Activated naive CD4-positive, alpha-beta T cell treated with anti-CD3 and anti-CD28 coated beads for 36 hours (primary cell): ENCODE measurements at regions of chr2 and their contacts with region 1.

Region 1: GRCh38 chr2:36246320-36246990 is 109.1 kb upstream of the CRIM1 start:
- DNase-seq: no peak
- H3K4me3 Mint-ChIP-seq: peak overlapping the region; percentile 24
- H3K27ac Mint-ChIP-seq: peak overlapping the region; percentile 72
- H3K4me1 Mint-ChIP-seq: peaks cover 59% of the 10 kb centered on the region
- H3K27me3 Mint-ChIP-seq: no peaks in the 10 kb centered on the region

Region 2: DNA sequence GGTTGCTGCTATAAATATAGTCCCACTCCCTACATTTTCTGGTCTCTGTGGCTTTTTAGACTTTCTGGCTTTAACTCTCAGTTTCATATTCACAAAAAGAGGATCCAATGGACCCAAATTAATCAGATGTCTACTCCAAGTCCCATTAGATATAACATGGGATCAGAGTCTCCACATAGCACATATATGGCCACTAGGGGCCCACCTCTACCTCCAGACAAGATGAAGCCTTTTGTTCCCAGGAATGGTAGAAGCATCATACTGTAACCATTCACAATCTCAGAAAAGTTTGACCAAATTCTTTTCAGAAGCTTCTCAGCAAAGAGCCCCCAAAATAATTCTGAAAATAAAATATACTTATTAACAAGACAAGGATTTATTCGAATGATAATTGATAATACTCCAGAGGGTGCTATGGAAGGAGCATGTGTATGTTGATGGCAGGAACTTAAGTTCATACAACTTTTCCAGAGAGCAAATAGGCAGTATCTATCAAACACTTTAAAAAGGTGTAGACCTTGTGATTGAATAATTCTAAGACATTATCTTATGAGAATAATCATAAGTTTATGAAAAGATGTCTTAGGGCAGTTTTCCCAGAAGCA is 273.2 kb before region 1 on chr2:
- CTCF ChIA-PET with region 1: no interaction called
- intact Hi-C with region 1: loop called (anchors 2 kb)
- DNase-seq: peak; percentile 33
- H3K4me3 Mint-ChIP-seq: no peak overlapping the region
- H3K27ac Mint-ChIP-seq: no peak overlapping the region
- H3K4me1 Mint-ChIP-seq: peaks cover 2% of the 10 kb centered on the region
- H3K27me3 Mint-ChIP-seq: peaks cover 4% of the 10 kb centered on the region

Region 3: DNA sequence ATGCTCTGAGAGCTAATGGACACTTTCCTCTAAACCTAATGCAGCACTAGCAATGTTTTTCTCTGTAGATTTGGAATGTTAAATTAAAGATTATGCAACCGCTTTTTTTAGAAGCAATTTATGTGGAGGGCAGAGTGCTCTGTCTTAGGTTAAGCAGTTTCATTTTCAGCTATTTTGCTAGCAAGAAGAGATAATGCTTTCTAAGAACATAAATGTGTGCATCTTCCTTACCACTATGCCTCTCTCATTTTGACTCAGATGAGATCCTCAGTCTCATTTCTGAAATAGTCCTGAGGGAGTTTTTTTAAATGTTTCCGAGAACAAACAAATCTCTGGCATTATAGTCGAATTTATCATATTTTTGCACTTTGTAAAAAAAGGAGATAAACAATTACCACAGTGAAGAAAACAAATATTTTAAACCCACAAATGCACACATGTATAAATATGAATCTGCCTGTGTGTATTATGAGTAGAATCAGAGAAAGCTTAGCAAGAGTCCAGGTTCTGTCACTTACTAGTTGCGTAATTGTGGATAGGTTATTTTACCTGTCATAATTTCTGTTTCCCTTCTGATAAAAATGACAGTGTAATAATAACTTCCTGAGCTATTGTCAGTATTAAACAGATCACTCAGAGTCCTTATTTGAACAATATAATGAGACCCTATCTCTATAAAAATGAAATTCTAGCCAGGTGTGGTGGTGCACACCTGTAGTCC is 98.6 kb before region 1 on chr2:
- CTCF ChIA-PET with region 1: no interaction called
- intact Hi-C with region 1: loop called (anchors 1 kb)
- DNase-seq: no peak
- H3K4me3 Mint-ChIP-seq: no peak overlapping the region
- H3K27ac Mint-ChIP-seq: no peak overlapping the region
- H3K4me1 Mint-ChIP-seq: peaks cover 7% of the 10 kb centered on the region
- H3K27me3 Mint-ChIP-seq: no peaks in the 10 kb centered on the region

Region 4: DNA sequence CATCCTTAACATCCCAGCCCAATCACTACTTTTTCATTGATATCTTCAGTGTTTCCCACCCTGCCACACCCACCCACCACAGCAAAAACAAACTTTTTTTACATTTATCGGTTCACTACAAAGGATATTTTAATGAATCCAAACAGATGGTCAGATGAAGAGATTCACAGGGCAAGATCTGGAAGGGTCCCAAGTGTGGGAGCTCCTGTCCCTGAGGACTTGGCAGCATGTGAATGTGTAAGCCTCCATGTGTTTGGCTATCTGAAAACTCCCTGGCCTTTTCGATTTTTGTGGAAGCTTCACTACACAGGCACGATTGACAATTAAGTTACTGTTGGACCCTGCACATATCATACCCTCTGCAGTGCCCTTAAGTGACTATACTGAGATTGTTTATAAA is 61.0 kb after region 1 on chr2:
- CTCF ChIA-PET with region 1: no interaction called
- intact Hi-C with region 1: loop called (anchors 1 kb)
- DNase-seq: no peak
- H3K4me3 Mint-ChIP-seq: no peak overlapping the region
- H3K27ac Mint-ChIP-seq: no peak overlapping the region
- H3K4me1 Mint-ChIP-seq: peaks cover 23% of the 10 kb centered on the region
- H3K27me3 Mint-ChIP-seq: peaks cover 3% of the 10 kb centered on the region

Region 5: DNA sequence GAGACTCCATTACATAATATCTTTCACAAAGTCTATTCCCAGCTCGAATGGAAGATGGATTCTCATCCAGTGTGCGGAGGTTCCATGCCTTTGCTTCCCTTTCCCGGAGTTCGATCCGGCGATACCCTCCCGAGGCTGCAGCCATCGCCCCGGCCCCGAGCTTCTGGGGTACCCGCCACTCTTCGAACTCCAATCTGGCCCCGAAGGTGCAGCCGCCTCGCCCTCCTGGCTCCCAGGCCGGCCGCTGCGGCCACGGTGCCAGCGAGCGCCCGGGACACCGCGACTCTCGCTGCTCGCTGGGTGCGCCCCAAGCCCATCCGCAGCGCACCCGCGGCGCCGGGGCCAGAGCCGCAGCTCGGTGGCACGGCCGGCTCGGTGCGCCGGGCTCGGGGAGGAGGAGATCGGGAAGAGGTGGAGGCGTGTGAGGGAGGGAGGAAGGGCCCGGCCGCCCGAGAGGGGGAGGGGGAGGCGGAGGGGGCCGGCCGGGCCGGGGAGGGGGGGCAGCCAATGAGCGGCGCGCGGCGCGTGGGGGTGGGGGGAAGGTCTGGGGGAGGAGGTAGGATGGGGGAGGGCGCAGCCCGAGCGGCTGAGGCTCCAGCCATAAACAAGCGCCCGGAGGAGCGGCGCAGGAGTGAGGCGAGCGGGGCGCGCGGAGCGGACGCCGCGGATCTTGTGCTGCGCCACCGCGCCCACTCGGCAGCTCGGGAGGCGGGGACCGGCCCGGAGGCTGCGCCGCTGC is 108.9 kb after region 1 on chr2 and contains the start of gene CRIM1:
- CTCF ChIA-PET with region 1: no interaction called
- intact Hi-C with region 1: loop called (anchors 1 kb)
- DNase-seq: peak; percentile 52
- H3K4me3 Mint-ChIP-seq: peak within 1 kb of the TSS; percentile 73
- H3K27ac Mint-ChIP-seq: no peak within 1 kb of the TSS
- H3K4me1 Mint-ChIP-seq: peaks cover 25% of the 10 kb centered on the region
- H3K27me3 Mint-ChIP-seq: peaks cover 34% of the 10 kb centered on the region
- total RNA-seq, gene CRIM1: 3.1 to 3.3 TPM

Region 6: DNA sequence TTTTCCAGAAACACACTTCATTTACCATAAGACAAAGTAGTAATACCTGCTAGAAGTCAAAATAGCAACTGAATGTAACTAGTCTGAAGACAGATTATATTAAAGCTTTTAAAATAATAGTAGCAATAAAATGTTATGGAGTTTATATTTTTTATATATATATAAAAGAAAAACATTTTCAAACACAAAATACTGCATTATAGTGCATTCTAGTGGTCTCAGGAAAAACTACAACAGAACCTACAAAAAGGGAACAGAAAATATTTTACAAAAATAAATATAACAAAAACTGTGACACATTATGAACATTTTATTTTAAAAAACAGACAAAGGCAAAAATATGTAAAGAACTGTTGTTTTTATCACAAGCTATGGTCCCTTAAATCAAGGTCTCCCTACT is 671.9 kb after region 1 on chr2:
- CTCF ChIA-PET with region 1: no interaction called
- intact Hi-C with region 1: loop called (anchors 10 kb)
- DNase-seq: no peak
- H3K4me3 Mint-ChIP-seq: no peak overlapping the region
- H3K27ac Mint-ChIP-seq: no peak overlapping the region
- H3K4me1 Mint-ChIP-seq: peaks cover 19% of the 10 kb centered on the region
- H3K27me3 Mint-ChIP-seq: no peaks in the 10 kb centered on the region

Region 7: DNA sequence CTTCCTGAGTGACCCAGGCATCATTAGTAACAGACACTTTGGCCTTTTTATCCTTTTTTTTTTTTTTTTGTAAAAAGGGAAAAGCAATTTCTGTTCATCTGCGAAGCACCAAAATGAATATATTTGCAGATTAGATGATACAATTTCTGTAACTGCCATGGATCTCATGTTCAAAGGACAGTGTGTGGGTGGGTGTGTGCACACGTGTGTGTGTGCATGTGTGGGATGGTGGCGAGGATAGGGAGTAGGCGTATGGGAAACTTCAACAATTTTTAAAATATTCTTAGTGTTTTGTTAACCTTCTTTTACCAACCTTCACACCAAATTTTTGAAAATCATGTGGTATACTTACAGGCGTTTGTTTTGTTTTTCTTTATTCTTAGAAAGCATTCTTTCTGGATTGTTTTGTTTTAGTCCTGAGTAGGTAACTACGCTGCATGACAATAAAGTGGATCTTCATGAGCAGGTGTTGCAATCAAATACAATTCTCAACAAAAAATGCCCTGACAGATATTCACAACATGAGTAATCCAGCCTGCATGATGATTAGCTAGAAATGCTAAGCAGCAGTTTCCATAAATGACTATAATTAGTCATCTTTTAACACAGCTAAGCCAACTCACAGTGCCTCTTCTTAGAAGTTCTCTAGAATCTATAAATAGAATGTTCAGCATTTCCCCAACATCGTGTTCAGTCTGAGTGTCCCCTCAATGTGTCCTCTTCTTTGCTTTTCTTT is 1625.2 kb after region 1 on chr2:
- CTCF ChIA-PET with region 1: no interaction called
- intact Hi-C with region 1: loop called (anchors 5 kb)
- DNase-seq: no peak
- H3K4me3 Mint-ChIP-seq: peak overlapping the region; percentile 25
- H3K27ac Mint-ChIP-seq: peak overlapping the region; percentile 86
- H3K4me1 Mint-ChIP-seq: peaks cover 30% of the 10 kb centered on the region
- H3K27me3 Mint-ChIP-seq: peaks cover 12% of the 10 kb centered on the region